CD4-positive, alpha-beta T cell (primary cell): ENCODE measurements at regions of chr16 and their contacts with region 1.

Region 1: GRCh38 chr16:117379-118365 is 20.8 kb downstream of the NPRL3 start:
- DNase-seq: peak; percentile 53 to 81 (median 62)
- ATAC-seq: peak; percentile 87
- H3K4me3 ChIP-seq: no peak overlapping the region
- H3K4me3 Mint-ChIP-seq: no peak overlapping the region
- H3K27ac ChIP-seq: no peak overlapping the region
- H3K27ac Mint-ChIP-seq: no peak overlapping the region
- H3K4me1 ChIP-seq: peaks cover 5% of the 10 kb centered on the region
- H3K4me1 Mint-ChIP-seq: peaks cover 11% of the 10 kb centered on the region
- H3K27me3 ChIP-seq: no peaks in the 10 kb centered on the region
- H3K27me3 Mint-ChIP-seq: no peaks in the 10 kb centered on the region
- CTCF ChIP-seq: peak; percentile 81

Region 2: DNA sequence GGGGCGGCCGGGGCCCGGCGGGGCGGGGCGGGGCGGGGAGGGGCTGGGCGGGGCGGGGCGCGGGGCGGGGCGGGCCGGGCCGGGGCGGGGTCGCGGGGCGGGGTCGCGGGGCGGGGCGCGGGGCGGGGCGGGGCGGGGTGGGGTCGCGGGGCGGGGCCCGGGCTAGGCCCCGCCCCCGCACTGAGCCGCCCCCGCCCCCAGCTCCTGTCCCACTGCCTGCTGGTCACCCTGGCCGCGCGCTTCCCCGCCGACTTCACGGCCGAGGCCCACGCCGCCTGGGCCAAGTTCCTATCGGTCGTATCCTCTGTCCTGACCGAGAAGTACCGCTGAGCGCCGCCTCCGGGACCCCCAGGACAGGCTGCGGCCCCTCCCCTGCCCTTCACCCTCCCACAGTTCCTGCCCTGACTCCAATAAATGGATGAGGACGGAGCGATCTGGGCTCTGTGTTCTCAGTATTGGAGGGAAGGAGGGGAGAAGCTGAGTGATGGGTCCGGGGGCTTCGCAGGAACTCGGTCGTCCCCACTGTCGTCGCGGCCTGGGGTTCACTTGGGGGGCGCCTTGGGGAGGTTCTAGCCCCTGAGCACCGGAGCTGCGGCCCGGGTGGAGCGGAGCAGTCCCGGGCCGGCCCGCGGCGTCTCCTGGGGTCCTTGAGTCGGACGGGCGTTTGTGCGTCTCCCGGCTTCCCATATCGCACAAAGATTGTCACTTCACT is 47.3 kb after region 1 on chr16:
- CTCF ChIA-PET with region 1: no interaction called
- POLR2A ChIA-PET with region 1: no interaction called
- intact Hi-C with region 1: no loop called
- DNase-seq: no peak
- ATAC-seq: peak; percentile 24
- H3K4me3 ChIP-seq: no peak overlapping the region
- H3K4me3 Mint-ChIP-seq: no peak overlapping the region
- H3K27ac ChIP-seq: no peak overlapping the region
- H3K27ac Mint-ChIP-seq: no peak overlapping the region
- H3K4me1 ChIP-seq: peaks cover 23% of the 10 kb centered on the region
- H3K4me1 Mint-ChIP-seq: peaks cover 4% of the 10 kb centered on the region
- H3K27me3 ChIP-seq: peaks cover 49 to 57% of the 10 kb centered on the region in 2 experiments
- H3K27me3 Mint-ChIP-seq: peaks cover 61% of the 10 kb centered on the region
- CTCF ChIP-seq: no peak

Region 3: DNA sequence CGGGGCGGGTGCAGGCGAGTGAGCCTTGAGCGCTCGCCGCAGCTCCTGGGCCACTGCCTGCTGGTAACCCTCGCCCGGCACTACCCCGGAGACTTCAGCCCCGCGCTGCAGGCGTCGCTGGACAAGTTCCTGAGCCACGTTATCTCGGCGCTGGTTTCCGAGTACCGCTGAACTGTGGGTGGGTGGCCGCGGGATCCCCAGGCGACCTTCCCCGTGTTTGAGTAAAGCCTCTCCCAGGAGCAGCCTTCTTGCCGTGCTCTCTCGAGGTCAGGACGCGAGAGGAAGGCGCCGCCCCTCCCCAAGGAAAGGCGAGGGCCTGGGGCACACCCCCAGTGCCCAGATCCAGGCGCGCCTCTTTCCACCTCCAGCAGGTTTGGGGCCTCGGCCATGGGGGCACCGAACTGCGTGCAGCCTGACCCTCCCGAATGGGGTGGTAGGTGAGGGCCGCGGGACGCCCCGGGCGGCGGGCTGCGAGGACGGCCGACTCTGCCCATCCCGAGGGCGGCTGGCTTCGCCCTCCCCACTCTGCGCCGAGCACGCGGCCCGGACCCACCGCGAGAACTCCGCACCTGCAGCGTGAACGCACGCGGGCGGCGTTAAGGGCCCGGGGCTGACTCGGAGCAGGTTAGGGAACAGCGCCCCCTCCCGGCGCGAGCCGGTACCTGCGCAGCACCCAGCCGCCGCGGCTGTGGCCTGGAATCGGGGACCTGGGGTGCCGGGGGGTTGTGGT is 63.4 kb after region 1 on chr16:
- CTCF ChIA-PET with region 1: interaction called, 3 read pairs
- POLR2A ChIA-PET with region 1: no interaction called
- intact Hi-C with region 1: loop called (anchors 1 kb)
- DNase-seq: peak; percentile 76 to 92 (median 82)
- ATAC-seq: peak; percentile 95
- H3K4me3 ChIP-seq: peak overlapping the region; percentile 46
- H3K4me3 Mint-ChIP-seq: no peak overlapping the region
- H3K27ac ChIP-seq: no peak overlapping the region
- H3K27ac Mint-ChIP-seq: no peak overlapping the region
- H3K4me1 ChIP-seq: peaks cover 25% of the 10 kb centered on the region
- H3K4me1 Mint-ChIP-seq: no peaks in the 10 kb centered on the region
- H3K27me3 ChIP-seq: peaks cover 27 to 33% of the 10 kb centered on the region in 2 experiments
- H3K27me3 Mint-ChIP-seq: peaks cover 28% of the 10 kb centered on the region
- CTCF ChIP-seq: peak; percentile 92

Region 4: GRCh38 chr16:203246-203645 is 85.6 kb after region 1 on chr16:
- CTCF ChIA-PET with region 1: no interaction called
- POLR2A ChIA-PET with region 1: no interaction called
- intact Hi-C with region 1: no loop called
- DNase-seq: no peak
- ATAC-seq: no peak
- H3K4me3 ChIP-seq: no peak overlapping the region
- H3K4me3 Mint-ChIP-seq: no peak overlapping the region
- H3K27ac ChIP-seq: no peak overlapping the region
- H3K27ac Mint-ChIP-seq: no peak overlapping the region
- H3K4me1 ChIP-seq: no peaks in the 10 kb centered on the region
- H3K4me1 Mint-ChIP-seq: no peaks in the 10 kb centered on the region
- H3K27me3 ChIP-seq: no peaks in the 10 kb centered on the region
- H3K27me3 Mint-ChIP-seq: no peaks in the 10 kb centered on the region
- CTCF ChIP-seq: no peak

Region 5: DNA sequence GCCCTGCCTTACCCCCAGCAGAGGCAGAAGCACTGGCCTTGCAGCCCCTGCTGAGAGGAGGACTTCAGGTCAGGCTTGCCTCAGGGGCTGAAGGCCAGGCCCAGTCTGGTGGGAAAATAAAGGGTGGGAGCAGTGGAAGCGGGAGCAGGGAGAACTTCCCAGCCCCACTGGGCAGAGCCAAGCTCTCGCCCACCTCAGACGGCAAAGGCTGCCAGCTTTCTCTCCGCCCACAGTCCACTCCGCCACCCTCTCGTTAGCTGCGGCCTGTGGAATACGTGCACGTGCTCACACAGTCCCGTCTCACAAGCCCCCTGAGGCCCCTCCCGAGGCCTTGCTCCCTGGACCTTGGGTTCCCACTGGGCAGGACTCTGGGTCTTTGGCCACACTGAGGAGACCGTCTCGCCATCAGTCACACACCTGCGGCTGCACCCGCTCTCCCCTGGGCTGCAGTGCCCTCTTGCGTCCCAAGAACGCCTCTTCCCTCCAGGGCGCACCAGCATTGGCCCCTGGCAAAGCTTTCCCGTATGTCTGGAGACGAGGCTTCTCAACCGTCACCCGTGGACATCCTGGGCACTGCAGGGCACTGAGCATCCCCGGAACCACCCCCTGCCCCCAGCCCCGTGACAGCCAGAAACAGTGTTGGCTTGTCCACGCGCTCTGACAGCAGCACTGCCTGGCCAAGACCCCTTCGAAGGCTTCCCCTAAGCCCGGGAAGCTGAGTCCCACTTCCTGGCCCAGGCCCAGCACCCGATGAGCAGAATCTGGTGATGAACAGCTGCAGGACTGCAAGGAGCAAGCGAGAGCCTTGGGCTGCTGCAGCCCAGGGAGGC is 244.4 kb after region 1 on chr16:
- CTCF ChIA-PET with region 1: interaction called, 4 read pairs
- POLR2A ChIA-PET with region 1: interaction called, 3 read pairs
- intact Hi-C with region 1: loop called (anchors 1 kb)
- DNase-seq: peak; percentile 63 to 88 (median 71)
- ATAC-seq: peak; percentile 99
- H3K4me3 ChIP-seq: no peak overlapping the region
- H3K4me3 Mint-ChIP-seq: peak overlapping the region; percentile 46
- H3K27ac ChIP-seq: no peak overlapping the region
- H3K27ac Mint-ChIP-seq: peak overlapping the region; percentile 50
- H3K4me1 ChIP-seq: peaks cover 22% of the 10 kb centered on the region
- H3K4me1 Mint-ChIP-seq: peaks cover 6% of the 10 kb centered on the region
- H3K27me3 ChIP-seq: no peaks in the 10 kb centered on the region
- H3K27me3 Mint-ChIP-seq: no peaks in the 10 kb centered on the region
- CTCF ChIP-seq: peak; percentile 72